ENCODE measurements at regions of chr13 and their contacts with region 1.

Region 1: GRCh38 chr13:28658796-28659620 is at the start of gene POMP:
- DNase-seq: peak; percentile 96
- ATAC-seq: peak; percentile 96 to 99 (median 98)
- H3K4me3 ChIP-seq: peak within 1 kb of the TSS; percentile 74 to 95 (median 89)
- H3K27ac ChIP-seq: peak within 1 kb of the TSS; percentile 83 to 99 (median 98)
- H3K4me1 ChIP-seq: peaks cover 11 to 72% (median 51%) of the 10 kb centered on the region in 9 donors
- H3K27me3 ChIP-seq: no peaks in the 10 kb centered on the region
- CTCF ChIP-seq: no peak
- total RNA-seq, gene POMP: 91.7 to 120 (median 101) TPM

Region 2: GRCh38 chr13:28138012-28138755 is 520.8 kb before region 1 on chr13 and contains the start of gene PAN3:
- intact Hi-C with region 1: loop called in 1 of 10 experiments (anchors 2 kb)
- DNase-seq: peak; percentile 93 to 96
- ATAC-seq: peak; percentile 87 to 93 (median 90)
- H3K4me3 ChIP-seq: peak within 1 kb of the TSS; percentile 84 to 100 (median 97)
- H3K27ac ChIP-seq: peak within 1 kb of the TSS; percentile 95 to 100 (median 98)
- H3K4me1 ChIP-seq: peaks cover 4 to 49% (median 36%) of the 10 kb centered on the region in 9 donors
- H3K27me3 ChIP-seq: no peaks in the 10 kb centered on the region
- CTCF ChIP-seq: peak in 4 of 9 donors; percentile 19 to 38 (median 28)
- total RNA-seq, gene PAN3: 7.4 to 14.0 (median 10.8) TPM

Region 3: GRCh38 chr13:28885181-28885580 is 226.2 kb after region 1 on chr13:
- intact Hi-C with region 1: no loop called
- DNase-seq: no peak
- ATAC-seq: no peak
- H3K4me3 ChIP-seq: no peak overlapping the region
- H3K27ac ChIP-seq: no peak overlapping the region
- H3K4me1 ChIP-seq: no peaks in the 10 kb centered on the region
- H3K27me3 ChIP-seq: peaks cover 0 to 5% (median 0%) of the 10 kb centered on the region in 7 donors
- CTCF ChIP-seq: no peak